Endothelial cell of umbilical vein (primary cell): ENCODE measurements at regions of chr3 and their contacts with region 1.

Region 1: DNA sequence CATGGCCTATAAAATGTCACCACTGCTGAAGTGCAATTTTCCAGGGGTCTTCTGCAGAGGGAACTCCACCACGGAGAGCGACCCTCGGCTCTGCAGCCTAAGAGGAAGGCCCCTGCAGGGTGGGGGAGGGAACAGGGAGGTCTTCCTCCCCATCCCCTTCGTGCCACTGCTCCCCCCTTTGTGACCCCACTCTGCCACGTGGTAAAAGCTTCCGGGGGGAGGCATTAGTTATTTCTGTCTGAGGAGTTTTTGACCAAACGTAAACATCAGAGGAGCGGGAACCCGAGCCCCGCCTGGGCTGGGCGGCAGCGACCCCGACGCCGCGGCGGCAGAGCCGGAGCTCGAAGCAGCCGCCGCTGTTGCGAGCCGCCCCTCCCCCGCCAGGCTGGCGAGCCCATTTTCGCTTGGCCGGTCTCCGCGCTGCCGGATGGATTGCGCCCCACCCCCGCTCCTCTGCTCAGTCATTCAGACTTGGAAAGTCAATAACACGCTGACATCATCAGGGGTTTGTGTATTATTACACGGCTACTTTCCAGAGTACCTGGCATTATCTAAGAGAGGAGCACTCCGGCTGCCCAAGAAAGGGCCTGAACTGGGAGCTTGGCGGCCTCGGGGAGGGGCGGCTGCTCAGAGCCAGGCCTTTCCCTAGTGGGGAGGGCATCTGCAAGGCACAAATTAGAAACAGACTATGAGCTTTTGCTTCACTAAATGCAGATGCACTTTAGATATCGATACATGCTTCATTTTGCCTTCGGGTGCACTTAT is 162.5 kb upstream of the TBL1XR1 start:
- DNase-seq: peak; percentile 98
- H3K4me3 ChIP-seq: peak overlapping the region in 2 of 3 experiments; percentile 16 to 43
- H3K27ac ChIP-seq: peak overlapping the region; percentile 98
- H3K4me1 ChIP-seq: peaks cover 50% of the 10 kb centered on the region
- H3K27me3 ChIP-seq: no peaks in the 10 kb centered on the region
- CTCF ChIP-seq: no peak
- POLR2A ChIP-seq: no peak

Region 2: DNA sequence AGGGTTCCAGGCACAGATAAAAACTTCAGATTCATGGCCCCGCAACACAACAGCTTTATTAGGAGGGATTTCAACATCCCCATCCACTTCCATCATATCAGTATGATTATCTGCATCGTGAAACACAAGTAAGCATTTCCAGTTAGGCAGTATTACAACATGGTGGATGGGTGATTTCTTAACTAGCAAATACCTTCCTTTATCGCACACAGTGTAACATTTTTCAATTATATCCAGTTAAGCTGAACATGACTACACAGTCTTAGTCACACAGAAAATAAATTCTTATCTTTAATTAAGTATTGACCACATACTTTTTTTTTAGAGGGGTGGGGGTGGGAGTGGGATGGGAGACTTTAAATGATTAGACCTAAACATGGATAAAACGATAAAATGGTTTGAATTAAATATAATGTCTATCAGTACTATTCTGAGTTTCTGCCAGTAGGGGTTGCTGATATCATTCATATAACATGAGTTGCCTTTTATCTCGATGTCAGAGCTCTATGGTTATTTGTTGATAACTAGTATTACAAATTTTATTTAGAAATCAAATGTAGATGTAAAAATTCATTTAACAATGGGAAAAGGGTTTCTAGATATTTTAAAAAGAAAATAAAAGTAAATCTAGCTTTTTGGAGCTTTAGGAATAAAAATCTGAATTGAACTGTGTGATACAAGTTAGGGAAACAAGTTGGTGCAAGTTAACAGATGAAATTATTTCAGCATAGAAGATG is 309.1 kb before region 1 on chr3:
- CTCF ChIA-PET with region 1: interaction called, 66 read pairs
- POLR2A ChIA-PET with region 1: interaction called, 3 read pairs
- dilution Hi-C with region 1: no loop called
- intact Hi-C with region 1: loop called (anchors 1 kb)
- DNase-seq: peak; percentile 71
- H3K4me3 ChIP-seq: no peak overlapping the region
- H3K27ac ChIP-seq: no peak overlapping the region
- H3K4me1 ChIP-seq: no peaks in the 10 kb centered on the region
- H3K27me3 ChIP-seq: no peaks in the 10 kb centered on the region
- CTCF ChIP-seq: no peak
- POLR2A ChIP-seq: no peak

Region 3: GRCh38 chr3:177320765-177321247 is 39.0 kb before region 1 on chr3:
- CTCF ChIA-PET with region 1: no interaction called
- POLR2A ChIA-PET with region 1: no interaction called
- dilution Hi-C with region 1: no loop called
- intact Hi-C with region 1: loop called (anchors 1 kb)
- DNase-seq: peak; percentile 83
- H3K4me3 ChIP-seq: no peak overlapping the region
- H3K27ac ChIP-seq: no peak overlapping the region
- H3K4me1 ChIP-seq: peaks cover 13% of the 10 kb centered on the region
- H3K27me3 ChIP-seq: no peaks in the 10 kb centered on the region
- CTCF ChIP-seq: no peak
- POLR2A ChIP-seq: no peak

Region 4: DNA sequence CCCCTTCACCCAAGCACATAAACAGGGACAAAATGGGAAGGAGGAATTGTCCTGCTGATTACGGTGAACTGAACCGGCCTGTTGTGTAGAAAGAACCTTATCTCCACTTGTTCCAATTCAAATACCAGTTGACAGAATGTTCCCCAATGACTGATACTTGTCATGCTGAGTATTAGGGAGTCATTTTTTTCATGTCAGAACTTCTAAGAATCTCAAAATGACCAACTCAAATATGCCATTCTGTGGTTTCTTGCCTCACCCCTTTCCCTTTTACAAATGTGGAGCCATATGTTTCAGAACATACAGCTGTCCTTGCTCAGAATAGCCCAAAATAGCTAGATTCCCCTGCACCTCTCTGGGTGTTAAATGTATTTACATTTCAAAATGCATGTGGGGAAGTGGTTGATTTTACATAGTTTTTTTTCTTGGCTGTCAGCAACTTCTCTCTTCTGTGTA is 243.4 kb after region 1 on chr3:
- CTCF ChIA-PET with region 1: no interaction called
- POLR2A ChIA-PET with region 1: no interaction called
- dilution Hi-C with region 1: no loop called
- intact Hi-C with region 1: loop called (anchors 2 kb)
- DNase-seq: peak; percentile 34
- H3K4me3 ChIP-seq: no peak overlapping the region
- H3K27ac ChIP-seq: no peak overlapping the region
- H3K4me1 ChIP-seq: peaks cover 13% of the 10 kb centered on the region
- H3K27me3 ChIP-seq: no peaks in the 10 kb centered on the region
- CTCF ChIP-seq: no peak
- POLR2A ChIP-seq: no peak

Region 5: GRCh38 chr3:177934001-177934891 is 574.5 kb after region 1 on chr3:
- CTCF ChIA-PET with region 1: interaction called, 7 read pairs
- POLR2A ChIA-PET with region 1: no interaction called
- dilution Hi-C with region 1: no loop called
- intact Hi-C with region 1: loop called (anchors 1 kb)
- DNase-seq: peak; percentile 12
- H3K4me3 ChIP-seq: no peak overlapping the region
- H3K27ac ChIP-seq: no peak overlapping the region
- H3K4me1 ChIP-seq: peaks cover 21% of the 10 kb centered on the region
- H3K27me3 ChIP-seq: no peaks in the 10 kb centered on the region
- CTCF ChIP-seq: no peak
- POLR2A ChIP-seq: no peak

Region 6: GRCh38 chr3:178263236-178263916 is 903.6 kb after region 1 on chr3:
- CTCF ChIA-PET with region 1: no interaction called
- POLR2A ChIA-PET with region 1: no interaction called
- dilution Hi-C with region 1: no loop called
- intact Hi-C with region 1: loop called (anchors 1 kb)
- DNase-seq: peak; percentile 88
- H3K4me3 ChIP-seq: no peak overlapping the region
- H3K27ac ChIP-seq: peak overlapping the region; percentile 55
- H3K4me1 ChIP-seq: peaks cover 17% of the 10 kb centered on the region
- H3K27me3 ChIP-seq: no peaks in the 10 kb centered on the region
- CTCF ChIP-seq: no peak
- POLR2A ChIP-seq: no peak